Mammary epithelial cell (primary cell): ENCODE measurements at regions of chr7 and their contacts with region 1.

Region 1: DNA sequence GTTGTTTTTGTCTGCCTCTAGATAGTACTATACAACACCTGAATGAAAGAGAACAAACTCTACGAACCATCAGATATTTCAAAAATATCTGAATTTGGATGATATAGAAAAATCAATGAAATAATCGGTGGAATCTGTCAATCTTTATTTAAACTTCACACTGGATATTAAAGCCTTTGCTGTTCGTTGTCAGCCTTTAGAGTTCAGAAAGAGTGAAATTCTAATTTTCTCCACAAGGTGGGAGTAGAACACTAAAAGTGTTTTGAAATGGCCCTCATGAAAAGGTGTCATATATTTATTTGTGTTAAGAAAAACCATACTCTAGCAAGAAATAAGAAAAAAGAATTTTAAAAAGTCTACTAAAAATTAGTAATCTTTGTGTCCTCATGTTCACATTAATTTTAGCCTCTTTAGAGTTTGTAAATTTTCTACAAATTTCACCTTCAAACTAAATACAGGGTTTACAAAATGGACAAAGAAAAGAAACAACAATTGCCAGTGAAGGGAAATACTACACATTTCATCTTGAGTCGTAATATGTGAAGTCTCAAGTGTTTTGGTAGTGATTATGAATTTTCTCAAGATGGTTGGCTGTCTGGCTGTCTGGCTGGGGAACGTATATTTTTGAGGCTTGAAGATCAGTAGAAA is 43.6 kb downstream of the DNAJB9 start:
- DNase-seq: peak; percentile 30
- H3K4me3 ChIP-seq: no peak overlapping the region
- H3K27ac ChIP-seq: no peak overlapping the region
- H3K4me1 ChIP-seq: no peaks in the 10 kb centered on the region
- H3K27me3 ChIP-seq: peaks cover 2% of the 10 kb centered on the region
- CTCF ChIP-seq: peak; percentile 52 to 66

Region 2: GRCh38 chr7:108480311-108480710 is 132.9 kb before region 1 on chr7:
- CTCF ChIA-PET with region 1: no interaction called
- dilution Hi-C with region 1: no loop called
- in situ Hi-C with region 1: no loop called
- intact Hi-C with region 1: no loop called
- DNase-seq: no peak
- H3K4me3 ChIP-seq: no peak overlapping the region
- H3K27ac ChIP-seq: no peak overlapping the region
- H3K4me1 ChIP-seq: no peaks in the 10 kb centered on the region
- H3K27me3 ChIP-seq: no peaks in the 10 kb centered on the region
- CTCF ChIP-seq: no peak

Region 3: DNA sequence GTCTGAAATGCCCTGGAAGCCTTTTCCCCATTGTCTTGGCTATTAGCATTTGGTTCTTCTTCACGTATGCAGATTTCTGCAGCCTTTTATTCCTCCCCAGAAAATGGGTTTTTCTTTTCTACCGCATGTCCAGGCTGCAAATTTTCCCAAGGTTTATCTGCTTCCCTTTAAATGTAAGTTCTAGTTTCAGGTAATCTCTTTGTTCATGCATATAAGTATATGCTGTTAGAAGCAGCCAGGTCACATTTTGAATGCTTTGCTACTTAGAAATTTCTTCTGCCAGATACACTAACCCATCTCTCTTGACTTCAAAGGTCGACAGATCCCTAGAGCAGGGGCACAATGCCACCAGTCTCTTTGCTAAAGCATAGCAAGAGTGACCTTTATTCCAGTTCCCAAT is 56.0 kb before region 1 on chr7:
- CTCF ChIA-PET with region 1: no interaction called
- dilution Hi-C with region 1: no loop called
- in situ Hi-C with region 1: no loop called
- intact Hi-C with region 1: no loop called
- DNase-seq: no peak
- H3K4me3 ChIP-seq: no peak overlapping the region
- H3K27ac ChIP-seq: no peak overlapping the region
- H3K4me1 ChIP-seq: no peaks in the 10 kb centered on the region
- H3K27me3 ChIP-seq: no peaks in the 10 kb centered on the region
- CTCF ChIP-seq: no peak

Region 4: DNA sequence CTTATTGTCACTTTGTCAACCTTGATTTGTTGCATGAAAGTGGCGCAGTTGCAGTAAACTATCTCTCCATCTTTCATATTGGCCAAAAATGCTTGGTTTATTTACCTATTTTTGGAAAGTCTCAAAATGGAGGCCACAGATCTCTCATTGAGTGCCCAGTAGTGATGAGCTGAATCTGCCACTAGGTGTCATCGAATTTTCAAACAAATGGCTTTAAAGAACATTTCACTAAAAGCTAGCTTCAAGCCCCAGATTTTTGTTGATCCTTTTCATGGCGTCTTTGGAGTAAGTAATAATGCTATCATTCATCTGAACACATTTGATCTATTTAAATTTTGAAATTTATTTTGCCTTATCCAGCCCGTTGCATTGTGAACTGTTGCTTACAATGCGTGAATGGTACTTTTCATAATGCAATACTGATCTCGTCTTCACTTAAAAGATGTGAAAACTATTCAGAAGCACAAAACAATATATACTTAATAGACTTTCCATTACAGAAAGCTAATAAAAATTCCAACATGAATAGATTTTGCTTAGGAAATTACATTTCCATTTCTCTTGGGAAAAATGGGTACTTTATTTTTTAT is 192.7 kb after region 1 on chr7:
- CTCF ChIA-PET with region 1: no interaction called
- dilution Hi-C with region 1: no loop called
- in situ Hi-C with region 1: no loop called
- intact Hi-C with region 1: loop called (anchors 10 kb)
- DNase-seq: peak; percentile 4
- H3K4me3 ChIP-seq: no peak overlapping the region
- H3K27ac ChIP-seq: no peak overlapping the region
- H3K4me1 ChIP-seq: no peaks in the 10 kb centered on the region
- H3K27me3 ChIP-seq: no peaks in the 10 kb centered on the region
- CTCF ChIP-seq: peak; percentile 52 to 54

Region 5: DNA sequence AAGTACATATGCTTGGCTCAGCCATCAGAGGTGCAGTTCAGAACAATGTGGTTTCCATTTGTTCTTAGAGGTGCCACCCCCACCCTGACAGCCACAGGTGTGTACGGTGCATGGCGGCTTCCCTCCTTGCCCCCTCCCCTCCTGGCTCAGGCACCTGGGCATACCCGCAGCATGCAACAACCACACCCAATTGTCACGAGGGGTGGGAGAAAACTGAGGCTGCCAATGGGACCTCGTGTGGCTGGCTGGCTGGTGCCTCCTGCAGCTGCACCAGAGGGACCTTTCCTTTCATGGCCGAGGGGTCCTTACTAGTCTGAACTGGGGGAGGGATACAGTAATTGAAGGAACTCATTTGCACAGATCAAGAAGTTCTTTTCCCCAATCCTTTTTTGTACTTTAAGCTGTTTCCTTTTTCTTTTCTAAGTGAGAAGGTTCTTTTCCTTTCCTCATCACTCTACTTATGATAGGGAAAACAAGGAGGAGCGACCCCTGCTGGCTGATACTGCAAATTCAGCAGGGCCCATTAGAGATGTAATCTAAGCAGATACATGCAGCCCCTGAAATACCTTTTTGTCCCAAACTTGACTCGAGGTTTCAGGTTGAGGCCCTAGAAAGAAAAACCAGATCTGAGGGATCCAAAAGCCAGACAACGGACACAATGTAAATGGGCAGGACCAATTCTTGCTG is 261.8 kb after region 1 on chr7:
- CTCF ChIA-PET with region 1: no interaction called
- dilution Hi-C with region 1: no loop called
- in situ Hi-C with region 1: no loop called
- intact Hi-C with region 1: loop called (anchors 5 kb)
- DNase-seq: peak; percentile 0
- H3K4me3 ChIP-seq: no peak overlapping the region
- H3K27ac ChIP-seq: no peak overlapping the region
- H3K4me1 ChIP-seq: no peaks in the 10 kb centered on the region
- H3K27me3 ChIP-seq: no peaks in the 10 kb centered on the region
- CTCF ChIP-seq: peak; percentile 19 to 40